ENCODE measurements at regions of chr10 and their contacts with region 1.

Region 1: DNA sequence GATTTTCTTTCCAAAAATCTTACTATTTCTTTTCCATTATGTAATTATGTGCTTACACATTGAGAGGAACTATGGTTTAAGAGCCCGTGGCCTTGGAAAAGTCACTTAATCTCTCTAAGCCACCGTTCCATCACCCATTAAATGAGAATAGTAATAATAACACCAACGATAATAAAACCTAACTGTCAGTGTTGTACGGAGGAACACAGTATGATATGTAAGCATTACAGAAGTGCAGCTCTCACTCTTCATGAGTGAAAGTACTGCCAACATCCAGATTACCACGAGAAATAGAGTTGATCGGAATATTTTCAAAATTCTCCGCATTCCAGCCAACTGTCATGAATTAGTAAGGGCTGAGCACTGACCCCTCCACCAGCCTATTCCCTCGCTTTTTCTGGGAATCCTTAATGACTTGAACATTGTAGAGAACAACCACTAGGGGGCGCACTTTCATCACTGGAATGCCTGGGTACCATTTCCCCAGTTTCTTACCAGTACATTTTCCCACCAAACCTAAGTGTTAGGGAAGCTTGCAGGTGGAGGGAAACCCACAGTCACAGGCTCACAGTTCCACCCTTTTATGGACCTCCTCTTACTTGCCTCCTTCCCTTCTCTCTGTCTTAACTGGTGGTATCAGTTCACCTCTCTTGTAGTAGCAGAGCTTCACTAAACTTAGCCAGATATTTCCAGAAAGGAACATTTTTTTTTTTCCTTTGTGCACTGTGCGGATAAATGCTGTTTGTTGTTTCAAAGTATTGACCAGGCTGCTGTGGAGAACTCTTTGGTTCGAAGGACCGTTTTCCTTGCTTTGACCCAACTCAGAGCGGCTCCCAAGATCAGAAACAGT is 27.8 kb downstream of the NKX2-3 start:
- DNase-seq: peak; percentile 46 to 71 (median 58)
- H3K4me3 ChIP-seq: no peak overlapping the region
- H3K27ac ChIP-seq: no peak overlapping the region
- H3K4me1 ChIP-seq: no peaks in the 10 kb centered on the region
- H3K27me3 ChIP-seq: peaks cover 15% of the 10 kb centered on the region
- CTCF ChIP-seq: peak; percentile 55 to 92 (median 71)
- POLR2A ChIP-seq: no peak

Region 2: DNA sequence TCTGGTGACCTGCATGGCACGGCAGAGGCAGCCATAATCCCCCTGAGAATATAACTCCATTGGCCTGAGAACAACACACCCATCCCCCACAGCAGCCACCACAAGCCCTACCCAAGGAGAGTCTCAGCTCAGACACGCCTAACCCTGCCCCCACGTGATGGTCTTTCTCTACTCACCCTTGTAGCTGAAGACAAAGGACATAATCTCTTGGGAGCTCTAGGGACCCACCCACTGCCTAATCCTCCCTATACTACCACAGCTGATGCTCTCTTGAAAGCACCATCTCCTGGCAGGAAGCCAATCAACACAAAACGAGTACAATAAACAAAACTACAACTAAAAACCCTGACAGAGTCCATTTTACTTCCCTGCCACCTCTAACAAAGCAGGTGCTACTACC is 294.1 kb before region 1 on chr10:
- intact Hi-C with region 1: no loop called
- DNase-seq: no peak
- H3K4me3 ChIP-seq: no peak overlapping the region
- H3K27ac ChIP-seq: no peak overlapping the region
- H3K4me1 ChIP-seq: no peaks in the 10 kb centered on the region
- H3K27me3 ChIP-seq: no peaks in the 10 kb centered on the region
- CTCF ChIP-seq: no peak
- POLR2A ChIP-seq: no peak

Region 3: DNA sequence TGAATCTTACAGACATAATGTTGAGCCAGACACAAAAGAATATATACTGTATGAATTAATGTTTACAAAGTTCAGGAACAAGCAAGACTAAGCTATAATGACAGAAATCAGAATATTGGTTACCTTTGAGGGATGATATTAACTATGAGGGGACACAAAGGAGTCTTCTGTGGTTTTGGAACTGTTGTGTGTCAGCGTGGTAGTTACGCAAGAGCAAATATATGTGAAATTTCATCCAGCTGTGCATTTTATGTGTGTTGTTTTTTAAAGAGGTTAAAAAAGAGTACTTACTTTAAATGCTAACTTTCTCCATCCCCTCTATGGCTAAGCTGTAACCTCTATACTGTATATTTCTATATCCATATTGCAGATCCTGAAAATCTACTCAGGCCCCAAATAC is 44.8 kb after region 1 on chr10:
- intact Hi-C with region 1: loop called in 1 of 2 experiments (anchors 5 kb)
- DNase-seq: no peak
- H3K4me3 ChIP-seq: no peak overlapping the region
- H3K27ac ChIP-seq: no peak overlapping the region
- H3K4me1 ChIP-seq: no peaks in the 10 kb centered on the region
- H3K27me3 ChIP-seq: peaks cover 4% of the 10 kb centered on the region
- CTCF ChIP-seq: no peak
- POLR2A ChIP-seq: no peak

Region 4: GRCh38 chr10:99711129-99711719 is 150.7 kb after region 1 on chr10:
- intact Hi-C with region 1: loop called in 1 of 2 experiments (anchors 5 kb)
- DNase-seq: peak in 4 of 7 donors; percentile 16 to 54 (median 45)
- H3K4me3 ChIP-seq: no peak overlapping the region
- H3K27ac ChIP-seq: no peak overlapping the region
- H3K4me1 ChIP-seq: peaks cover 12 to 32% of the 10 kb centered on the region in 2 donors
- H3K27me3 ChIP-seq: no peaks in the 10 kb centered on the region
- CTCF ChIP-seq: peak in 5 of 6 experiments; percentile 36 to 59 (median 51)
- POLR2A ChIP-seq: no peak

Region 5: DNA sequence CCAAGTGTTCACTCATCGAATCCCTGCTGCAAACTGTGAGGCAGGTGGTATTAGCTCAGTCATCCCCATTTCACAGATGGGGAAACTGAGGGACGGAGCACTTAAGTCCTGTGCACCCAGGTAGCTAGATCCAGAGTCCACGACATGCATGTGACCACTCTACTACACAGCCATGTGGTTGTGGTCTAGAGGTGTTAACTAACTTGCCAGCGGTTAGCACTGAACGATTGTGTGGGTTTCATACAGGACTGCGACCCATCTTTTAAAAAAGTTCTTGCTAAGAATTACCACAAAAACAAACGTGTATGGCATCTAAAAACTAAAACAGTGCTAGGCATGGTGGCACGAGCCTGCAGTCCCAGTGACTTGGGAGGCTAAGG is 205.8 kb after region 1 on chr10:
- intact Hi-C with region 1: no loop called
- DNase-seq: no peak
- H3K4me3 ChIP-seq: no peak overlapping the region
- H3K27ac ChIP-seq: no peak overlapping the region
- H3K4me1 ChIP-seq: no peaks in the 10 kb centered on the region
- H3K27me3 ChIP-seq: no peaks in the 10 kb centered on the region
- CTCF ChIP-seq: no peak
- POLR2A ChIP-seq: no peak

Measured in adrenal gland (tissue), 19 donors.